Heart right ventricle (tissue), 16 donors: ENCODE measurements at regions of chr7 and their contacts with region 1.

Region 1: DNA sequence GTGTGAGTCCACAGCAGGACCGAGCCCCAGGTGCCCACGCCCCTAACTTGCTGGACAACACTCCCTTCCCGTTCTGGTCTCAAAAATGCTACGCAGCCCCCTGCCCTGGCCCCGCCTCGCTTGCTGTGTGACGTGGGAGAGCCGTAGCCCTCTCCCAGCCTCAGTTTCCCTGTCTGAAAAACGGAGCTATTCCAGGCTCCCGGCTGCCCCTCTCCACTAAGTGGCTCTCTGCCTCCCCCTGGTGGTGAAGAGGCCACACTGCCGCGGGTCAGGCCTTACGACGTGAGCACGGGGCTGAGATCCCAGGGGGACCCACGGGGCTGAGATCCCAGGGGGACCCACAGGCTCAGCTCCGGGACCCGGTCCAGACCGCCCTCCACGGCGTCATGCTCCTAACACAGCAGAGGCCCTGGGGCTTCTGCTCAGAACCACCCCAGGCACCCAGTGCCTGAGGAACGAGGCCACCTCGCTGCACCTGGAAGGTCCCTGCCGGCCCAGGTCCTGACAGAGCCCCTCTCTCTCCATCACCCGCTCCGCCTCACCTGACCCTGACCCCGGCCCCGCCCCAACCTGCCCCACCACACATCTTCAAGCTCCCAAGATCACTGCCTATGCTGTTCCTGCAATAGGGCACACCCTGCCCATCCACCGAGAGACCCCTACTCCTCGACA is 26.7 kb downstream of the MICALL2 start:
- DNase-seq: peak; percentile 65 to 78
- ATAC-seq: peak; percentile 48 to 83 (median 65)
- H3K4me3 ChIP-seq: no peak overlapping the region
- H3K27ac ChIP-seq: no peak overlapping the region
- H3K4me1 ChIP-seq: peaks cover 0 to 8% (median 0%) of the 10 kb centered on the region in 9 donors
- H3K27me3 ChIP-seq: peaks cover 5 to 41% (median 34%) of the 10 kb centered on the region in 7 donors
- CTCF ChIP-seq: peak; percentile 87 to 99 (median 97)

Region 2: GRCh38 chr7:1193593-1194424 is 238.7 kb before region 1 on chr7:
- intact Hi-C with region 1: loop called in 3 of 10 experiments (anchors 10 kb)
- DNase-seq: peak; percentile 41 to 60
- ATAC-seq: peak; percentile 80 to 94 (median 88)
- H3K4me3 ChIP-seq: no peak overlapping the region
- H3K27ac ChIP-seq: no peak overlapping the region
- H3K4me1 ChIP-seq: peaks cover 0 to 15% (median 0%) of the 10 kb centered on the region in 9 donors
- H3K27me3 ChIP-seq: peaks cover 0 to 56% (median 29%) of the 10 kb centered on the region in 7 donors
- CTCF ChIP-seq: peak in 8 of 9 donors; percentile 14 to 63 (median 50)

Region 3: GRCh38 chr7:1412322-1413261 is 20.0 kb before region 1 on chr7:
- intact Hi-C with region 1: no loop called
- DNase-seq: peak; percentile 68 to 76
- ATAC-seq: peak; percentile 89 to 94 (median 92)
- H3K4me3 ChIP-seq: peak overlapping the region in 1 of 10 donors; percentile 26
- H3K27ac ChIP-seq: no peak overlapping the region
- H3K4me1 ChIP-seq: peaks cover 0 to 13% (median 7%) of the 10 kb centered on the region in 9 donors
- H3K27me3 ChIP-seq: peaks cover 9 to 71% (median 61%) of the 10 kb centered on the region in 7 donors
- CTCF ChIP-seq: peak; percentile 37 to 85 (median 79)